ENCODE measurements at regions of chr3 and their contacts with region 1.

Region 1: DNA sequence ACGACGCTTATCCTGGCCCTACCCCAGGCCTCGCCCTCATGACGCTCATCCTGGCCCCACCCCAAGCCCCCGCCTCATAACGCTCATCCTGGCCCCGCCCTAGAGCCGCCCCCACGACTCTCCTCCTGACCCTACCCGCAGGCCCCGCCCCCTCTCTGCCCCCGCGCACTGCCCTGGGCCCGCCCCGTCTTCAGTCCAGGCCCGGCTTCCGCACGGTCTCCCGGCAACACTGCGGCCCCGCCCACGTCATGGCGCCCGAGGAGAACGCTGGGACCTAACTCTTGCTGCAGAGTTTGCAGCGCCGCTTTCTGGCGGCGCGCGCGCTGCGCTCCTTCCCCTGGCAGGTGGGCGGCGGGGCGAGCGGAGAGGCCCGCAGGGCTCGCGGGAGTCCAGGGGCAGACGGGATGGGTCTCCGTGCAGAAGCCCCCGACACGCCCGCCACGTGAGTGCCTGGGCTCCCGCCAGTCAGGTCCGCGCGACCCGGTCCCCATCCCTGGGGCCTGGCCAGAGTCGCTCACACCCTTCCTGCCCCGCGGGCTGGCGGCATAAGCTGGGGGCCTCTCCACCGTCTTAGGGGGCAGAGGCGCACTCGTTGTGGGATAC is 52.5 kb upstream of the ROPN1B start:
- DNase-seq: peak; percentile 91
- ATAC-seq: peak; percentile 90
- H3K4me3 Mint-ChIP-seq: peak overlapping the region; percentile 90
- H3K27ac Mint-ChIP-seq: peak overlapping the region; percentile 90
- H3K4me1 Mint-ChIP-seq: peaks cover 11% of the 10 kb centered on the region
- H3K27me3 Mint-ChIP-seq: no peaks in the 10 kb centered on the region
- CTCF ChIP-seq: no peak

Region 2: GRCh38 chr3:125594581-125595011 is 321.9 kb before region 1 on chr3:
- CTCF ChIA-PET with region 1: no interaction called
- POLR2A ChIA-PET with region 1: no interaction called
- intact Hi-C with region 1: loop called (anchors 1 kb)
- DNase-seq: no peak
- ATAC-seq: no peak
- H3K4me3 Mint-ChIP-seq: peak overlapping the region; percentile 97
- H3K27ac Mint-ChIP-seq: peak overlapping the region; percentile 92
- H3K4me1 Mint-ChIP-seq: peaks cover 44% of the 10 kb centered on the region
- H3K27me3 Mint-ChIP-seq: no peaks in the 10 kb centered on the region
- CTCF ChIP-seq: no peak

Region 3: GRCh38 chr3:126083913-126084767 is 167.7 kb after region 1 on chr3 and contains the start of gene SLC41A3:
- CTCF ChIA-PET with region 1: no interaction called
- POLR2A ChIA-PET with region 1: no interaction called
- intact Hi-C with region 1: loop called (anchors 1 kb)
- DNase-seq: peak; percentile 87
- ATAC-seq: peak; percentile 93
- H3K4me3 Mint-ChIP-seq: peak within 1 kb of the TSS; percentile 88
- H3K27ac Mint-ChIP-seq: peak within 1 kb of the TSS; percentile 85
- H3K4me1 Mint-ChIP-seq: peaks cover 16% of the 10 kb centered on the region
- H3K27me3 Mint-ChIP-seq: no peaks in the 10 kb centered on the region
- CTCF ChIP-seq: no peak
- total RNA-seq, gene SLC41A3: 34.8 and 36.2 TPM in 2 replicates

Region 4: DNA sequence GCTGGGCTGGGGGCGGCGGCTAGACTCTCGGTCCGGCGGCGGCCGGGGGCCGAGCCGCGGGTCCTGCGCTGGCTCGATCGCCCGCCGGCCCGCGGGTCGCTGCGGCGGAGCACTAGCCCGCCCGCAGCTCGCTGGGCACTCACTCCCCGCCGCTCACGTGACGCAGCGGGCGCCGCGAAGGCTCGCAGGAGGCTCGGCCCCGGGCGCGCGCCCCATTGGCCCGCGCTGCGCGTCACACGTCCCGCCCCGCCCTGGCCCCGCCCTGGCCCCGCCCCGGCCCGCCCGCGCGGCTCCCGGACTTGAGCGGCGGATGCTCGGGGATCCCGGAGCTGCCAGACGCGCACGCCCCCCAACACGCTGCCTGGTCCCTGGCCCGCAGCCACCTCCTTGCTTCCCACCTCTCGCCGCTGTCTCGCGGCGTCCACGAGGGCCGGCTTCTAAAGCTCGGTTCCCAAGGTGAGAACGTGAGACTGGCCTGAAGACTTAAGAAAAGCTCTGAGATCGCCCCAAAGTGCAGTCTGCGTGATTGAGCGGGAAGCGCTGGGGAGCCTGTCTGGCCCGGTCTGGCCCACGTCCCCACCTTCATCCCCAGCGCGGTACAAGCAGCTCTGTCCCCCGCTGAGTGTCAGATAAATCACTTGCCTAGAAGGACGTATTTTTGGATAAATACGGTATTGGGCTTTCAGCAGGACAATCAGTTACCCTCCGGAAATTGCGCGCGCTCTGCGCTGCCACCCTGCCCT is 441.0 kb after region 1 on chr3 and contains the start of gene KLF15:
- CTCF ChIA-PET with region 1: no interaction called
- POLR2A ChIA-PET with region 1: no interaction called
- intact Hi-C with region 1: loop called (anchors 2 kb)
- DNase-seq: peak; percentile 76
- ATAC-seq: peak; percentile 93
- H3K4me3 Mint-ChIP-seq: peak within 1 kb of the TSS; percentile 88
- H3K27ac Mint-ChIP-seq: no peak within 1 kb of the TSS
- H3K4me1 Mint-ChIP-seq: peaks cover 16% of the 10 kb centered on the region
- H3K27me3 Mint-ChIP-seq: peaks cover 35% of the 10 kb centered on the region
- CTCF ChIP-seq: no peak
- total RNA-seq, gene KLF15: 0.31 and 0.39 TPM in 2 replicates

Region 5: GRCh38 chr3:126475413-126476114 is 559.1 kb after region 1 on chr3 and contains the start of gene ZXDC:
- CTCF ChIA-PET with region 1: no interaction called
- POLR2A ChIA-PET with region 1: no interaction called
- intact Hi-C with region 1: loop called (anchors 1 kb)
- DNase-seq: peak; percentile 92
- ATAC-seq: peak; percentile 86
- H3K4me3 Mint-ChIP-seq: peak within 1 kb of the TSS; percentile 87
- H3K27ac Mint-ChIP-seq: peak within 1 kb of the TSS; percentile 63
- H3K4me1 Mint-ChIP-seq: peaks cover 37% of the 10 kb centered on the region
- H3K27me3 Mint-ChIP-seq: no peaks in the 10 kb centered on the region
- CTCF ChIP-seq: no peak
- total RNA-seq, gene ZXDC: 37.4 and 45.4 TPM in 2 replicates

Region 6: DNA sequence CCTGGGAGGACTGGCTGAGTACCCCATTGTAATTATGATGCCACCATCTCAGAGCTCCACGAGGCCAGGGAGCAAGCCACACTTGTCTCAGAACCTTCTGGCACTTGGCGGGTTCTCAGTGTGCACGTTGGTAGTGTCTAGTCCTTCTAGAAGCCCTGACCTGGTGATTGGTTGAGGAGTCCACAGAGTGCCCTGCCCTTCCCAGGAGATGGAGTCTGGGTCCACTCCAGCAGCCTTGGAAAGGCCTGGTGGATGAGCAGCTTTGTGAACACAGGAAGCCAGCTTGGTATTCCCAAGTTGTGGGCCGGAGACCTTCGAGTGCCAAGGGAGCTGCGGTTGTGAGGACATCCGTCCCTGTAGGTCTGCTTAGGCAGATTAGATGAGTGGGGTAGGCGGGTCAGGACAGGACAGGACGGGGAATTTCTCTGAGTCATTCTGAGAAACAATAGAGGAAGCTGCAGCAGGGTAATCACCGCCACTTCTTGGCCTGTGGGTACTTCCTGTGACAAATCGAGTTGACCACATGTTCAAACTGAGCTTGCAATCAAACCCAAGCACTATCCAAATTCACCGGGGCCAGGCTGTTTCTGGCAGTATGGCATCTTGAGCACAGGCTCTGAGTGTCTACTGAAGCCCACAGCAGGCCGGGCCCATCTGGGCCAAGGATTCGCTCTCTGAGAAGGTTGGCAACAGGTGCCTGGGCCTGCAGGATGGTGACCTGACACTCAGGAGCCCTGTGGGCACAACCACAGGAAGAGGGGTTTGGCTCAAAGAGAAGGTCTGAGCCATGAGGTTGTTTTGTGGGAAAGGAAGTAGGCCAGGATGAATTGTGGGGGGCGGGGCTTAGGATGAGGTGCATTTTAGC is 994.9 kb after region 1 on chr3:
- CTCF ChIA-PET with region 1: no interaction called
- POLR2A ChIA-PET with region 1: no interaction called
- intact Hi-C with region 1: loop called (anchors 2 kb)
- DNase-seq: peak; percentile 65
- ATAC-seq: peak; percentile 94
- H3K4me3 Mint-ChIP-seq: peak overlapping the region; percentile 75
- H3K27ac Mint-ChIP-seq: peak overlapping the region; percentile 95
- H3K4me1 Mint-ChIP-seq: peaks cover 44% of the 10 kb centered on the region
- H3K27me3 Mint-ChIP-seq: peaks cover 36% of the 10 kb centered on the region
- CTCF ChIP-seq: no peak